ENCODE measurements at regions of chr12 and their contacts with region 1.

Region 1: DNA sequence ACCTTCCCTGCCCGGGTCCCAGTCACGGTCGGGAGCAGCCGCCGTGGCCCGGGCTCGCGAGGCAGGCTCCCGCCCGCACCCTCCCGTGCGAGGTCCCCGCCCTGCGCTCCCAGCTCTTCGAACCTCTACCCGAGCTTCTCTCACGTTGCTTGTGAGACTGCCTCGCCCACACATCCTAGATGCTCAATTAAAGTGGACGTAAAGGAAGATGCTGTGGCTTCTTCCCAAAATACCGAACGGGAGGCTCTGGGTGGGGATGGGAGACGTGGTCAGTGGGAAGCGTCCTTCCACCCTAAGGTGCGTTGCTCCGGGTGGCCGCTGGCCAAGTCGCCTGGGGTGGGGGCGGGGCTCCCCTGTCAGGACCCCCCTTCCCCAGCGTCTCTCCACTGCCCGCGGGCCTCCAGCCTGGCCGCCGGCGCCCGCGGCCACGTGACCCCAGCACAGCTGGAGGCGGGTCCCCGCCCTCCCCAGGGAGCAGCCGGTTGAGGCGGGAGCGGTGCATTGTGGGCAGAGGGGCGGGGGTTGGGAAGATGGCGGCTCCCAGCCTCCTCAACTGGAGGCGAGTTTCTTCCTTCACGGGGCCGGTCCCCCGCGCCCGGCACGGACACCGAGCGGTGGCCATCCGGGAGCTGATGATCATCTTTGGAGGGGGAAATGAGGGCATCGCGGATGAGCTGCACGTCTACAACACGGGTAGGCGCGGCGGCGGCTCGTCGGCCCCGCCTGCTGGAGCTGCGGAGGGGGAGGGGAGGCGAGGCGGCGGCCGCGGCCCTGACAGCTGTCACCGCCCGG is at the start of gene HCFC2:
- DNase-seq: peak; percentile 87 to 89
- ATAC-seq: peak; percentile 95 to 96
- H3K4me3 ChIP-seq: peak within 1 kb of the TSS; percentile 73 to 98 (median 80)
- H3K27ac ChIP-seq: peak within 1 kb of the TSS; percentile 91 to 97 (median 96)
- H3K4me1 ChIP-seq: peaks cover 17 to 20% of the 10 kb centered on the region in 2 donors
- H3K27me3 ChIP-seq: no peaks in the 10 kb centered on the region
- CTCF ChIP-seq: peak in 1 of 5 experiments; percentile 9
- POLR2A ChIP-seq: peak in 1 of 2 donors; percentile 89
- total RNA-seq, gene HCFC2: 19.4 to 27.7 (median 21.8) TPM

Region 2: DNA sequence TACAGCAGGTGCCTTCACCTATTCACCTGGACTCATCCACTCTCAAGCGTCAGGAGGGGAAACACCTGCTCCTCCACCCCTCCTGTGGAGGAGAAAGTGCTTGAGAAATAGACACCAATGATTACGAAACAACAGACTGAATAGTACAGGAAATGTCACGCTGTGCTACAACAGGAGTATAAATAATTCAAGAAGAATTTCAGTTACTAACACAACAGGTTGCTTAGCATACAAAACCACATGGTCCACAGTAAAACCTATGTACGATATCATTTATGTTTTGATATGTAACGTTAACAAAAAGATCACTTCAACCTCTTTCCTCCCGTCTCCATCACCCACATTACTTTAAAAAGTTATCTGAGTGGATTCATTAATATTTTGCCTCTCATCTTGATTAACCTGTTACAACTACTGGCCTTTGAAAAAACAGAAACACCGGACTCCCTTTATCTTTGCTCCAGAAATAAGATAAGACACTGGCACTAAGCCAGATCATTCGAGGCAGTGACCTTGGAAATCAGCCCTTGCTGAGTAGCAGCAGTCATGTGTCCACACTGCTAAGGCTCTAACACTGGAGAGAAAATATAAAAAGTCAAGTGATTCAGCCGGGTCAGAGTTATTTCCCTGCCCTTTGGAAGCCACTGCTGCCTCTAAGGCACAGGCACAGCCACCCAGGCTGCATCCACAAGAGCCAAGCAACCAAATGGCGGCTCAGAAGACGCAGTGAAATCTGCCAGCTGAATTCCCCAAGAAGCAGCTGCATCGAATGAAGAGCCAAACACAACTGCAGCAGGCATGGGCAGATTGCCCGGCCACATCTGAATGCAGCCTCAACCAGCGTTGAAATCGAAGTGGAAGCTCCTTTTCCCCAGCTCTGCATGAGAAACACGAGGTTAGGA is 264.1 kb before region 1 on chr12:
- in situ Hi-C with region 1: no loop called
- intact Hi-C with region 1: loop called (anchors 1 kb)
- DNase-seq: peak; percentile 70 to 77
- ATAC-seq: peak; percentile 87 to 88
- H3K4me3 ChIP-seq: peak overlapping the region; percentile 2 to 35 (median 26)
- H3K27ac ChIP-seq: peak overlapping the region; percentile 81 to 94 (median 90)
- H3K4me1 ChIP-seq: peaks cover 29 to 34% of the 10 kb centered on the region in 2 donors
- H3K27me3 ChIP-seq: no peaks in the 10 kb centered on the region
- CTCF ChIP-seq: no peak
- POLR2A ChIP-seq: no peak

Region 3: GRCh38 chr12:103965590-103966504 is 98.4 kb before region 1 on chr12 and contains the start of gene TDG:
- in situ Hi-C with region 1: loop called in 1 of 4 experiments (anchors 10 kb)
- intact Hi-C with region 1: loop called (anchors 1 kb)
- DNase-seq: peak; percentile 98 to 99
- ATAC-seq: peak; percentile 99 to 100
- H3K4me3 ChIP-seq: peak within 1 kb of the TSS; percentile 74 to 97 (median 88)
- H3K27ac ChIP-seq: peak within 1 kb of the TSS; percentile 90 to 97 (median 95)
- H3K4me1 ChIP-seq: peaks cover 33 to 46% of the 10 kb centered on the region in 2 donors
- H3K27me3 ChIP-seq: no peaks in the 10 kb centered on the region
- CTCF ChIP-seq: peak in 4 of 5 experiments; percentile 26 to 43 (median 35)
- POLR2A ChIP-seq: peak; percentile 86 to 88
- total RNA-seq, gene TDG: 5.1 to 17.5 (median 9.0) TPM

Region 4: DNA sequence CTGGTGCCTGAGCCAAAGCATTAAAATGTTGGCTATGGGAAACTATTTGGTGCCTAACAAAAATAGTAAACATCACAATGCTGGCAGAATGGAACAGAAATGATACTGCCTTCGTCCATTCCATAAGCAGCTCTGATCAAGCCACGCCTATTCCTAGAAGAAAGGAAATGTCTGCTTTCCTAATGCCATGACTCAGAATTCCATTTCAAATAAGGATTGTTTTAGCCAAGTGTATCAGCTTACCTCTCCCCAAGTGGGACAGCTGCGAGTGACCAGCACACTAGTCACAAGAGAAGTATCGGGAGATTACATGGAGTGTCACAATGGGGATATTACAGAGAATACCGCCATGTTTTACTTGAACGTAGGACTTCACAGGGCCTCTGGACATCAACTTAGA is 53.0 kb before region 1 on chr12:
- in situ Hi-C with region 1: no loop called
- intact Hi-C with region 1: loop called (anchors 1 kb)
- DNase-seq: peak; percentile 27 to 44
- ATAC-seq: peak; percentile 99 to 100
- H3K4me3 ChIP-seq: no peak overlapping the region
- H3K27ac ChIP-seq: peak overlapping the region; percentile 41 to 72 (median 52)
- H3K4me1 ChIP-seq: peaks cover 11 to 17% of the 10 kb centered on the region in 2 donors
- H3K27me3 ChIP-seq: no peaks in the 10 kb centered on the region
- CTCF ChIP-seq: no peak
- POLR2A ChIP-seq: no peak

Region 5: DNA sequence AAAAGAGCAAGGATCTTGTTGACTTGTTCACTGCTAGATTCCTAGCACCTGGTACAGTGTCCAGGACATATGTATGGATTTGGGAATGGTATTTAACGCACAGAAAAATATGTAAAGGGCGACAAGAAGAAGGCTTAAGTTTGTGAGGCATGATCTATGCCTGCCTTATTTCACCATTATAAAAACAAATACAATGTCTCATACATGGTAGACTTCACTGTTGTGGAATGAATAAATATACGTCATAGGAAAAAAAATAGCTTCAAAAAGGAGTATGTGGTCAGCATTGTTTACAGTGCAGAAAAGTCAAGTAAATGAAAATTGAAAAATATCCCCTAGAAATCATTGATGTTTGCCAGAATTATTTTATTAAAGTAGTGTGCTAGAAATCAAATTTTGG is 30.1 kb after region 1 on chr12:
- in situ Hi-C with region 1: no loop called
- intact Hi-C with region 1: no loop called
- DNase-seq: no peak
- ATAC-seq: no peak
- H3K4me3 ChIP-seq: no peak overlapping the region
- H3K27ac ChIP-seq: no peak overlapping the region
- H3K4me1 ChIP-seq: no peaks in the 10 kb centered on the region
- H3K27me3 ChIP-seq: no peaks in the 10 kb centered on the region
- CTCF ChIP-seq: no peak
- POLR2A ChIP-seq: no peak

Region 6: GRCh38 chr12:104137913-104138796 is 73.9 kb after region 1 on chr12 and contains the start of gene NFYB:
- in situ Hi-C with region 1: no loop called
- intact Hi-C with region 1: loop called (anchors 1 kb)
- DNase-seq: peak; percentile 97
- ATAC-seq: peak; percentile 99
- H3K4me3 ChIP-seq: peak within 1 kb of the TSS; percentile 64 to 78 (median 70)
- H3K27ac ChIP-seq: peak within 1 kb of the TSS; percentile 87 to 93 (median 90)
- H3K4me1 ChIP-seq: peaks cover 30 to 35% of the 10 kb centered on the region in 2 donors
- H3K27me3 ChIP-seq: no peaks in the 10 kb centered on the region
- CTCF ChIP-seq: no peak
- POLR2A ChIP-seq: peak; percentile 58 to 72
- total RNA-seq, gene NFYB: 16.5 to 35.1 (median 21.4) TPM

Measured in gastrocnemius medialis (tissue), 4 donors.